Caco-2 (cell line): ENCODE measurements at regions of chr14 and their contacts with region 1.

Region 1: GRCh38 chr14:20461274-20462001 is at the start of gene PIP4P1:
- DNase-seq: peak; percentile 99 to 100
- H3K4me3 ChIP-seq: peak within 1 kb of the TSS; percentile 93
- H3K4me3 Mint-ChIP-seq: peak within 1 kb of the TSS; percentile 83
- H3K27ac Mint-ChIP-seq: peak within 1 kb of the TSS; percentile 96
- H3K4me1 ChIP-seq: peaks cover 16% of the 10 kb centered on the region
- H3K4me1 Mint-ChIP-seq: peaks cover 17% of the 10 kb centered on the region
- H3K27me3 ChIP-seq: no peaks in the 10 kb centered on the region
- H3K27me3 Mint-ChIP-seq: no peaks in the 10 kb centered on the region
- CTCF ChIP-seq: no peak
- total RNA-seq, gene PIP4P1: 39.6 and 46.2 TPM in 2 replicates

Region 2: DNA sequence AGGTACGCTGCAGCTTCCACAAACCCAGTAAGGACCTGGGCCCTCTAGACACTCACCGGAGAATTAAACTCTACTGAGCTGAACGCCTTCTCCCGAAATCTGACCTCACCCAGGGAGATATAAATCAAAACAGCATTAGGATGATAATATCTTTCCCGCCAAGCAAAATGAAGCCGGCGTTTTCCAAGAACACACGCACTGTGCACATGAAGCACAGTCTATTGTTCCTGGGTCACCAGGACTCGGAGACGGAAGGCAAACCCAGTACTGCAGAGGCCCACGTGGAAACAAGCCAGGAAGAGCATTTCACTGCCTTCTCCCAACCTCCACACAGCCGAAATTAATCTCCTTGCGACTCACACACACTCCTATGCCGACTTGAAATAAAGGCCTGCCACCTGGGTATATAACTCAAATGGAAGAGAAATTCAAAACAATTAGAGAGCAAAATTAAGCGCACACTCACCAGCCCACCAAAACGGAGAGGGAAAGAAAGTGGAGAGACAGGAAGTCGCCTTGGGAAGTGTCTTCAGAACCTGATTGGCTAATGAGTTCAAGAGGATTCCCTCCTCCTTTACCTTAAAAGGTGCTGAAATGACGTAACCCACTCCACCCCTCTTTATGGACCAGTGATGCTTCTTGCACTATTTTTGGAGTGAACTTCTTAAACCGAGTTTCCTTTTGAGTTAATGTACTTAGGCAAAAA is 128.5 kb before region 1 on chr14 and contains the start of gene CCNB1IP1:
- CTCF ChIA-PET with region 1: no interaction called
- POLR2A ChIA-PET with region 1: interaction called, 12 read pairs
- intact Hi-C with region 1: no loop called
- DNase-seq: peak; percentile 69 to 76
- H3K4me3 ChIP-seq: peak within 1 kb of the TSS; percentile 60
- H3K4me3 Mint-ChIP-seq: peak within 1 kb of the TSS; percentile 96
- H3K27ac Mint-ChIP-seq: peak within 1 kb of the TSS; percentile 96
- H3K4me1 ChIP-seq: peaks cover 10% of the 10 kb centered on the region; the same call in 1 of the 2 replicates
- H3K4me1 Mint-ChIP-seq: peaks cover 22% of the 10 kb centered on the region
- H3K27me3 ChIP-seq: no peaks in the 10 kb centered on the region
- H3K27me3 Mint-ChIP-seq: no peaks in the 10 kb centered on the region
- CTCF ChIP-seq: no peak
- total RNA-seq, gene CCNB1IP1: 111 and 118 TPM in 2 replicates

Region 3: DNA sequence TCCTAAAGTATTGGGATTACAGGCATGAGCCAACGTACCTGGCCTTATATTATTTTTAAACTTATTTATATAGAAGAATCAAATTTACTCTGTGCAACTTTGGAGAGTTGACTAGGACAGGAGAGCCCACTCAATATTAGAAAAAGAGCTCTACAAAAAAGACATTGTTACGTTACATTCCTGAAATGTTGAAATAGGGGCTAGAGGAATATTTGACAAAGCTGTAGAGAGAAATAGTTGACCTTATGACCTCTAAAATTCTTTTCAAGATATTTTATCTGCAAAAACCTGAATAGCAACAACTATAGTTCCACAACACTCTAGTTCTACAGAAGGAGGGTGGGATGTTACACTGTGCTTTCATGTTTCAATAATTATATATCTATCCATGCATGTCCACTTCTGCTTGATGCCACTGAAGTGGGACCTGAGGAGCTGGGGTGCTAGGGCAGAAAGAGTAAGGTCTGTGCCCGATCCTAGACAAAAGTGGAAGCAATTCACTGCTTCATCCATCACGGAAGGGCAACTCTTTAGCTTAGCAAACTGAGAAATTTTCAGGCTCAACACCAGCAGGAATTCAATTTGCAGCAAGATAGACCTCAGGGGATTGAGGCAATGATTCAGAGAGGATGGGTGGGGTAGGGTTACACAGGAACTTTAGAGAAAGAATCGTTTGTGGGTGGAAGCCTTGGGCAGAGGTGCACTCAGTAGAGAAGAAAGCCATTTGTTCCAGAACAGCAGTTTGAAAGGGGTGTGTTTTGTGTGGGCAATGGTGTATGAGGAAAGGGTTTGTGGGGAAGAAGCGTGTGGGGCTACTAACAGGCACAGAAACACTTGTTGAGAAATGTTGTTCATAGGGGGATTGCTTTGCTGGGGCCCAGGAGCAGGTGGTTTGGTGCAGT is 27.9 kb after region 1 on chr14:
- CTCF ChIA-PET with region 1: no interaction called
- POLR2A ChIA-PET with region 1: interaction called, 5 read pairs
- intact Hi-C with region 1: loop called (anchors 2 kb)
- DNase-seq: peak in 1 of 2 experiments; percentile 2
- H3K4me3 ChIP-seq: no peak overlapping the region
- H3K4me3 Mint-ChIP-seq: no peak overlapping the region
- H3K27ac Mint-ChIP-seq: peak overlapping the region; percentile 14
- H3K4me1 ChIP-seq: peaks cover 37% of the 10 kb centered on the region
- H3K4me1 Mint-ChIP-seq: peaks cover 29% of the 10 kb centered on the region
- H3K27me3 ChIP-seq: no peaks in the 10 kb centered on the region
- H3K27me3 Mint-ChIP-seq: no peaks in the 10 kb centered on the region
- CTCF ChIP-seq: no peak